Right ventricle myocardium inferior (tissue), 1 donor: ENCODE measurements at regions of chr4 and their contacts with region 1.

Region 1: DNA sequence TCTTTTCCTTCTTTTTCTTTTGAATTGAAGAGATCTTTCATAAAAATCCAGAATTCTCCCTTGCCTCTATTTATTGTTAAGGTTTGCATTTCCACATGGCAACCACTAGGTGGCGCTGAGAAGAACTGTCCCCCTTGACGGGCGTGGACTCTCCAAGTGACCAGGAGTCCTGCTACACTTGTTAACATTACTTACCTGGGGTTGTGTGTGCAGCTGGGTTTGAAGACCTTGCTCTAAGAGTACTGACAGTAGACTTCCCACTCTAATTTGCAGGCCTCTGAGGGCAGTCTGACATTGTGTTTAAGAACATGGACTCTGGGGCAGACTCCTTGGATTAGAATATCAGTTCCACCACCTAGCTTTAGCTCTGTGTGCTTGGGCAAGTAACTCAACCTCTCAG is 52.8 kb downstream of the GPRIN3 start:
- DNase-seq: no peak
- ATAC-seq: no peak

Region 2: GRCh38 chr4:89294573-89295269 is 39.9 kb after region 1 on chr4:
- intact Hi-C with region 1: loop called (anchors 5 kb)
- DNase-seq: no peak
- ATAC-seq: no peak